ENCODE measurements at regions of chr2 and their contacts with region 1.

Region 1: GRCh38 chr2:75466708-75467311 is 93.9 kb downstream of the EVA1A start:
- DNase-seq: peak; percentile 32
- CTCF ChIP-seq: peak; percentile 55

Region 2: GRCh38 chr2:74966887-74967286 is 499.9 kb before region 1 on chr2:
- CTCF ChIA-PET with region 1: no interaction called
- POLR2A ChIA-PET with region 1: no interaction called
- DNase-seq: no peak
- CTCF ChIP-seq: no peak

Region 3: GRCh38 chr2:75053484-75054112 is 413.2 kb before region 1 on chr2:
- CTCF ChIA-PET with region 1: interaction called, 10 read pairs
- POLR2A ChIA-PET with region 1: no interaction called
- DNase-seq: peak; percentile 64
- CTCF ChIP-seq: peak; percentile 82

Region 4: GRCh38 chr2:75199428-75200011 is 267.3 kb before region 1 on chr2 and contains the start of gene TACR1:
- CTCF ChIA-PET with region 1: interaction called, 11 read pairs
- POLR2A ChIA-PET with region 1: interaction called, 3 read pairs
- DNase-seq: peak; percentile 64
- CTCF ChIP-seq: peak; percentile 76

Region 5: GRCh38 chr2:75432761-75433361 is 33.9 kb before region 1 on chr2:
- CTCF ChIA-PET with region 1: interaction called, 29 read pairs
- POLR2A ChIA-PET with region 1: no interaction called
- DNase-seq: peak; percentile 63
- CTCF ChIP-seq: no peak

Region 6: DNA sequence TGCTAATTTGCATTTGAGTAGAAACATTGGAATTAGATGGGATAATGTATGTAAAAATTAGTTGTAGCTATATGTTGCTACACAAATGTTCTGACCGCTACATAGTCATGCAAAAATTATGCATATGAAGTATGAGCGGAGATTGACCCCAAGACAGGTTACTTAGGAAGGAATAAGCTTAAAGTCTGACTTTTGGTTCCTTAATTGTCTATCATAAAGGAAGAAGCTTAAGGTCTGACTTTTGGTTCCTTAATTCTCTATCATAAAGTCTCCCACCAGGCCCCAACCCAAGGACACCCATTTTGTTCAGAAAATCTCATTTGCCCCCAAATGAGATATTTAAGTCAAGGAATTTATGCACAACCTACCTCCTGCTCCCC is 12.6 kb before region 1 on chr2:
- CTCF ChIA-PET with region 1: interaction called, 56 read pairs
- POLR2A ChIA-PET with region 1: no interaction called
- DNase-seq: no peak
- CTCF ChIP-seq: no peak

Region 7: DNA sequence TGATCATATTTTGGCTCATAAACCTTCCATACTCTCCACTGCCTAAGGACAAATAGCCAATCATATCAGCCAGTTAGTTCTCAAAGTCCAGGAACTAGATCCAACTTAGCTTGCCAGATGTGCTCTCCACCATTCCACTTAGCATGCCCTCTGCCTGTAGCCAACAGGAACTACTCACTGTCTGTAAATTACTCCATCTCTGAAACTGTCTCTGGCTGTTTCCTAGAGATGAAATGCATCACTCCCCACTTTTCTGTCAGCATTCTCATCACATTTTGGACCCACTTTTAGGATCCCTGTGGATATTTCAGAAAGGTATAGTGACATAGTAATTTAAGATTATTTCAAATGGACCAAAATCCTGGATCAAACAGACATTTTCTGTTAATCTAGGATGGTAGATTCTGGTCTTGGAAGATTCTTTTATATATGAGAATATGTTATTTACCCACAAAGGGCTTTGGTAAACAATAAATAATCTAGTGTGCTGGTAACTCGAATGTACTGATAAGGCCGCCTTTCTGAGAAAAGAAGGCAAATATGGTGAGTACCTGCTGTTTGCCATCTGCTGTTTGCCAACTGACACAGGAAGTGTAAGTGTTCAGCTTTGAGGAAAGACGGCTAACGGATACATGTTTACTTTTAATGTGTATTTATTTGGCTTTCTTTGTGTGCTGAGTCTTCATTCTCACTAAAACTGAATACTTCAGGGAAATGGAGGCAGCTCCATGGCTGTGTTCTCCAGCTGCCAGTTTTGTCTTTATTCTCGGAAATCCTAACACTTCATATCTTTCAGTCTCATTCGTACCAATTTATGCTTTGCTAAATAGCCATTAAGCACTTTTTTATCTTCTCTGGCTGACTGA is 14.4 kb after region 1 on chr2:
- CTCF ChIA-PET with region 1: interaction called, 39 read pairs
- POLR2A ChIA-PET with region 1: no interaction called
- DNase-seq: no peak
- CTCF ChIP-seq: no peak

Measured in GM10248 (cell line).